B cell (primary cell): ENCODE measurements at regions of chr6 and their contacts with region 1.

Region 1: GRCh38 chr6:26383624-26384417 is 913 bp downstream of the BTN2A2 start:
- DNase-seq: peak; percentile 54
- ATAC-seq: no peak
- H3K4me3 ChIP-seq: peak overlapping the region; percentile 70 to 97 (median 89)
- H3K4me3 Mint-ChIP-seq: peak overlapping the region; percentile 97
- H3K27ac ChIP-seq: peak overlapping the region; percentile 90 to 98
- H3K27ac Mint-ChIP-seq: peak overlapping the region; percentile 96
- H3K4me1 ChIP-seq: peaks cover 35 to 49% of the 10 kb centered on the region in 2 donors
- H3K4me1 Mint-ChIP-seq: peaks cover 66% of the 10 kb centered on the region
- H3K27me3 ChIP-seq: no peaks in the 10 kb centered on the region
- H3K27me3 Mint-ChIP-seq: no peaks in the 10 kb centered on the region
- CTCF ChIP-seq: no peak

Region 2: DNA sequence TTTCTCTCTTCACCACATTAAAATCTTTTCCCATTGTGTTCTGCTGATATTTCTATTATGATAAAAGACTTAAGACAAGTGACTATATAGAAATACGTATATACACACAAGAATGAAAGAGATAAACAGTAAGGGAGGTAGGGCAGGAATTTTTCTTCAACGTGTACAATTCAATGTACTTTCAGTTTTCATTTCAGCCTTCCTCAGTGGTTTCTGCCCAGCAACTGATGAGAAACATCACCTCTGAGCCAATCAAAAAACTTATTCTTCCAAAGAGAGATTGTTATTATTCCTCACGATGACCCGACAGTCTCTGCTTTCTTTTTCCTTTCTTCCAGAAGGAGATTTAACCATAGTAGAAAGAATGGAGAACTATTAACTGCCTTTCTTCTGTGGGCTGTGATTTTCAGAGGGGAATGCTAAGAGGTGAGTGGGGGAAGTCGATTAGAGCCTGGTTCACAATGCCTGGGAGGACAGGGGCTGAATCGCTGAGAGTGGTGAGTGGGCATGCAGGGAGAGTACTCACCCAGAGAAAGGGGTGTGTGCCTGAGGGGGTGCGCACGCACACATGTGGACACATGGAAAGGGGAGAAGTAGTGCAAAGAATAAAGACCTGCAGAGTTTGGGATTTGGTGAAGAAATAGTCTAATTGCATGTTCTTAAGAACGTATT is 18.3 kb after region 1 on chr6 and contains the start of gene BTN3A1:
- CTCF ChIA-PET with region 1: no interaction called
- POLR2A ChIA-PET with region 1: interaction called, 6 read pairs
- intact Hi-C with region 1: loop called (anchors 1 kb)
- DNase-seq: peak; percentile 86
- ATAC-seq: peak; percentile 87
- H3K4me3 ChIP-seq: peak within 1 kb of the TSS; percentile 51 to 98 (median 94)
- H3K4me3 Mint-ChIP-seq: peak within 1 kb of the TSS; percentile 98
- H3K27ac ChIP-seq: peak within 1 kb of the TSS; percentile 64 to 84
- H3K27ac Mint-ChIP-seq: peak within 1 kb of the TSS; percentile 97
- H3K4me1 ChIP-seq: peaks cover 43 to 53% of the 10 kb centered on the region in 2 donors
- H3K4me1 Mint-ChIP-seq: peaks cover 63% of the 10 kb centered on the region
- H3K27me3 ChIP-seq: no peaks in the 10 kb centered on the region
- H3K27me3 Mint-ChIP-seq: no peaks in the 10 kb centered on the region
- CTCF ChIP-seq: no peak
- total RNA-seq, gene BTN3A1: 173 and 175 TPM in 2 replicates